ENCODE measurements at regions of chr11 and their contacts with region 1.

Region 1: DNA sequence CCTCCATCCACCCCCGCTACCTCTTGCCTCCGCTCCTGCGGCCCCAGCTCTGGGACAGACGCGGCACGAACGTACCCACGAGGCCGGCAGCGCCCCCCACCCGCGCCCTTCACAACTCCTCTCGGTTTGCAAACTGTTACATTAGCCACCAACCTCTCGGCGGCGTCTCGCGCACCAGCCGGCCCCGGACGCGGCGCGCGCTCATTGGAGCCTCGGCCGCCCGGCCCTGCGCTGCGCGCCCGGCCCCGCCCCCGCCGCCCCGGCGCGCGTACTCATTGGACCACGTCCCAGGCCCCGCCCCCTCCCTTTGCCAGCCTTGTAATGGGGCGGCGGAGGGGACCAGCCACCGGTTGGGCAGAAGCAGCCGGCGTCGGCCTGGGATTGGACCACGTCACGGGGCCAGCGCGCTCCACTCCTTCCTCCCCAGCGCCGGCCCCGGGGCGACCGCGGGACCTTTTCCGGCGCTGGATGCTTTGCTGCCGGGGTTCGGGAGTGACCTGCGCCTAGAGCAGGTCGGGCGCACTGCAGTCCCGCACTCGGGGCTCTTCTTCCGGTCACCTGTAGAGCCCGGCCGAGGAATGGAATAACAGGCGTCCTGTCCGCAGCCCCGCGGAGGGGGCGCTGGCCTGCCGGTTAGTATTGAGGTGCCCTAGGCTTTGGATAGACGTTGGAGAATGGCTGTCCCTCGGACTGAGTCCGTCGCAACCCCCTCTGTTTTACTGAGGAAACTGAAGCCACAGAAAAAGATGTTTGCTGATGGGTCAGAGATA is at the start of gene HYOU1:
- DNase-seq: peak; percentile 99
- H3K4me3 Mint-ChIP-seq: peak within 1 kb of the TSS; percentile 95
- H3K27ac Mint-ChIP-seq: peak within 1 kb of the TSS; percentile 91
- H3K4me1 Mint-ChIP-seq: peaks cover 52% of the 10 kb centered on the region
- H3K27me3 Mint-ChIP-seq: no peaks in the 10 kb centered on the region
- total RNA-seq, gene HYOU1: 123 to 125 TPM

Region 2: DNA sequence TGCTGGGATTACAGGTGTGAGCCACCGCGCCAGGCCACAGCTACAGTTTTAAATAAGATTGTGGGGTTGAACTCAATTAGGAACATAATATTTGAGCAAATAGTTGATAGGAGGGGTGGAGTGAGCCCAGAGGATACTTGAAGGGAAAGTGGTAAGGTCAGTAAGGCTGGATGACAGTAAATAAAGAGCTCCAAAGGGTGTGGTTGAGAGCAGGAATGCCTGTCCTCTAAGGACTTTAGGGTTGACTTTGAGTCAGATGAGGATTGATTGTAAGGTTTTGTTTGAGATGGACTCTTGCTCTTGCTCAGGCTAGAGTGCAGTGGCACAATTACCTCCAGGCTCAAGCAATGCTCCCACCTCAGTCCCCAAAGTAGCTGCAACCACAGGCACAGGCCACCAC is 83.2 kb before region 1 on chr11:
- CTCF ChIA-PET with region 1: no interaction called
- POLR2A ChIA-PET with region 1: no interaction called
- DNase-seq: no peak
- H3K4me3 Mint-ChIP-seq: no peak overlapping the region
- H3K27ac Mint-ChIP-seq: no peak overlapping the region
- H3K4me1 Mint-ChIP-seq: no peaks in the 10 kb centered on the region
- H3K27me3 Mint-ChIP-seq: peaks cover 16% of the 10 kb centered on the region

Region 3: DNA sequence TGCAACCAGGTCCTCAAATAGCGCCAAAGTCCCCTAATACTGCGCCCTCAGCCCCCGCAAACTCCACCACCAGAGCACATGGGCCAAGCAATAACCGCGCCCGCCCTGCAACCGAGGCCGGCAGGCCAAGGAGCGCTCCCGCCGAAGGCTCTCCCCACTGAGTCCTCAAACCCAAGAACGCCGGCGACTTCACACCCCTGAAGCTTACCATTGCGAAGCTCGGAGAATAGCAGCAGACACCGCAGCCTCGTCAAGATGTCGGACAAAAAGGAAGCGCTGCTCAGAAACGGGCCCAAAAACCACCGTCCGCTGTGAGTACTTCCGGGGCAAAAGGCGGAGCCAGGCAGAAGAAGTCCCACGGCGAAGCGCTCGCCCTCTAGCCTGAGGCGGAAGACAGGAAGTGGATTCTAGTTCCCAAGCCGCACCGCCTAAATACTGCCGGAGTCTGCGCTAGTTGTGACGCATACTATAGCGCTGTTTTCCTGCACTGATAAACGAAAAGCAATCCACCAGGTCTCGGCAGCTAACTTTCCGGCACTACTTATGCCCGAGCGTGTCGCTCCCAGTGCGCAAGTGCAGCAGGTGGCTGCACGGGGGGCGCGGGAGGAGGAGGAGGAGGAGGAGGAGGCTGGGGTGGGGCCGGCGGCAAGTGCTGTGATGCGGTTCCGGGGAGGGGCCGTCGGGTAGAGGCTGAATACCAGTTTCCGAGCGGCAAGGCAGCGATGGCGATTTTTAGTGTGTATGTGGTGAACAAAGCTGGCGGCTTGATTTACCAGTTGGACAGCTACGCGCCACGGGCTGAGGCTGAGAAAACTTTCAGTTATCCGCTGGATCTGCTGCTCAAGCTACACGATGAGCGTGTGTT is 38.9 kb before region 1 on chr11 and contains the starts of genes RPS25 and TRAPPC4:
- CTCF ChIA-PET with region 1: interaction called, 21 read pairs
- POLR2A ChIA-PET with region 1: interaction called, 32 read pairs
- DNase-seq: peak; percentile 96
- H3K4me3 Mint-ChIP-seq: peak within 1 kb of the TSS; percentile 90
- H3K27ac Mint-ChIP-seq: peak within 1 kb of the TSS; percentile 100
- H3K4me1 Mint-ChIP-seq: peaks cover 56% of the 10 kb centered on the region
- H3K27me3 Mint-ChIP-seq: no peaks in the 10 kb centered on the region
- total RNA-seq, gene RPS25: 1,257 to 1,287 TPM
- total RNA-seq, gene TRAPPC4: 67.0 to 71.1 TPM

Region 4: DNA sequence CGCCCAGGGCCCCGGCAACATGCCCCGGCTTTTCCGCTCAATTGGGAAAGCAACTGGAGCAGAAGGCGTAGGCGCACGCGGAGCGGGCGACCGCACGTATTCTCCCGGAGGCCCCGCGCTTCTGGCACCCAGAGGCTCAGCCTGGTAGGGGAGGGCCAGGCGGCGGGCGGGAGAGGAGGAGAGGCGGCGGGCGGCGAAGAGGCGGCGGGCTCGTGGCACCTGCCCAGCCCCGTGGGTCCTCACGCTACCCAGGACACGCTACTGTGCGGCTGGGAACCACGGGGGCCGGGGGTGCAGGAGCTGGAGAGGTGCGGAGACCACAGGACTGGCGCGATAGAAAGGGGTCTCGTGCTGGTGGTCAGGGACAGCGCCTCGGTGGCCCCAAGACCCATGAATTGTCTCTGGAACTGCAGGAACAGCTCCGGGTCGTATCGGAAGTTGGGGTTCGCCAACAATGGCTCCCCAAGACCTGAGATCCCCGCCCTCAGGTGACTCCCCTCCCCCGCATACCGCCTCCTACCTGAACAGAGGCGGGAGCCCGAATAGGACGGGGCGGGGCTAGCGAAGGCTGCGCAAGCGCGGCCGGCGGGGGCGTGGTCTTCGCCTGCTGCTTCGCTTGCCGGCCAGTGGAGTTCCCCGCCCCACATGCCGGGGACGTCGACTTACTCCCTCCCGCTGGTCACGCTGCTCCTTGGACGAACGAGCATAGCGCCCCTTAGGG is 26.7 kb before region 1 on chr11 and contains the start of gene SLC37A4:
- CTCF ChIA-PET with region 1: interaction called, 9 read pairs
- POLR2A ChIA-PET with region 1: interaction called, 24 read pairs
- DNase-seq: peak; percentile 98
- H3K4me3 Mint-ChIP-seq: peak within 1 kb of the TSS; percentile 77
- H3K27ac Mint-ChIP-seq: peak within 1 kb of the TSS; percentile 78
- H3K4me1 Mint-ChIP-seq: peaks cover 29% of the 10 kb centered on the region
- H3K27me3 Mint-ChIP-seq: no peaks in the 10 kb centered on the region
- total RNA-seq, gene SLC37A4: 31.6 to 33.9 TPM

Region 5: DNA sequence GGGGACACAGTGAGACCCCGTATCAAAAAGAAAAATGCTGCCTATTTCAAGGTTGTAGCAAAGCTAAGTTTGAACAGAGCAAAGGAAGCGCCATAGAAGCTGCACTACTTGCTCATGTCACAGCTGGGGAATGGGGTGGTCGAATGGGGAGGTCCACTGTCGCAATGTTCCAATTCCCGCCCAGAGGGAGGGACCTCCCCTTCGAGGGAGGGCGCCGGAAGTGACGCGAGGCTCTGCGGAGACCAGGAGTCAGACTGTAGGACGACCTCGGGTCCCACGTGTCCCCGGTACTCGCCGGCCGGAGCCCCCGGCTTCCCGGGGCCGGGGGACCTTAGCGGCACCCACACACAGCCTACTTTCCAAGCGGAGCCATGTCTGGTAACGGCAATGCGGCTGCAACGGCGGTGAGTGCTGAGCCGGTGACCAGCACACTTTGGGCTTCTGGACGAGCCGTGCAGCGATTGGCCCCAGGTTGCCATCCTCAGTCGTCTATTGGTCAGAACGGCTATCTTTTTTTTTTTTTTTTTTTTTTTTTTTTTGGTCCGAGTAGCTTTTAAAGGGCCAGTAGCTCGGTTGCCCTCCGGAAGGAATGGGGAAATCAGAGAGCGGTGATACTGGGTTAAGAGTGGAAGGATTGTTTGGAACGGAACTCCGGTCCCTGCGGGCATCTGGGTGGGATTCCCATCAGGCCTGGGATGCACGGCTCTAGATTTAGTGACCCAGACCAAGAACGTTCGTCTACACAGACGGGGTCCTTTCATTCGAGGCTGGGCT is 27.7 kb after region 1 on chr11 and contains the start of gene HMBS:
- CTCF ChIA-PET with region 1: interaction called, 9 read pairs
- POLR2A ChIA-PET with region 1: interaction called, 11 read pairs
- DNase-seq: peak; percentile 89
- H3K4me3 Mint-ChIP-seq: peak within 1 kb of the TSS; percentile 98
- H3K27ac Mint-ChIP-seq: peak within 1 kb of the TSS; percentile 91
- H3K4me1 Mint-ChIP-seq: peaks cover 47% of the 10 kb centered on the region
- H3K27me3 Mint-ChIP-seq: no peaks in the 10 kb centered on the region
- total RNA-seq, gene HMBS: 17.3 to 18.8 TPM

Region 6: DNA sequence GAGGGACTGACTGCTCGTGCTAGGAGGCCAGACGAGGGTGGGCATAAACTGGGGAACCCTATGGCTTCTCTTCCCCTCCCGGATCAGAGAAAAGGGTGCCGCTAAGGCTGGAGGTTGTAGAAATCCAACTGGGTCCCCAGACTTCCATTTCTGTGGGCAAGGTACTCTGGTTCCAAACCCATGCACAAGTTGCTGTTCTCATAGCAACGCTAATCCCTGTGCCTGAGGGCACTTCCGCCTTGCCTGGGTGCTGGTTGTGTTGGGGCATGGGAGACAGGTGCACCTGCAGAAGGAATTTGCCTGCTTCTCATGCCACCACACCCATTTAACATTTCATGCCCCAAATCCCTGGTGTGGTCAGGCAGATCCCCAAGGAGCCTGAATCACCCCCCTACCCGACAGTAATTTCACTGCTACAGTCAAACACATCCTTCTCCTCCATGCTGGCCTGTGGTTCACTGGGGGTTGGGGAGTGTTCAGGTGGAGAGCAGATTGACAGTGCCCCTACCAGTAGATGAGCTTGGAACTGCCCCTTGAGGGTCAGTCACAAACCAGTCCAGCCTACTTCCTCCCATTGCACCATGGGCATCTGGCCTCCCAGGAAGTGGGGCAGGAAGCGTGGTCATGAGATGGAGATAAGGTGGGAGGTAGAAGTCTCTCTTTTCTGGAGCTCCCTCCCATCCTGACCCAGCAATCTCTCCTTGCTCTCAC is 51.1 kb after region 1 on chr11:
- CTCF ChIA-PET with region 1: interaction called, 4 read pairs
- POLR2A ChIA-PET with region 1: interaction called, 10 read pairs
- DNase-seq: peak; percentile 55
- H3K4me3 Mint-ChIP-seq: peak overlapping the region; percentile 88
- H3K27ac Mint-ChIP-seq: peak overlapping the region; percentile 77
- H3K4me1 Mint-ChIP-seq: peaks cover 49% of the 10 kb centered on the region
- H3K27me3 Mint-ChIP-seq: no peaks in the 10 kb centered on the region

Measured in activated CD4-positive, alpha-beta memory T cell treated with anti-CD3 and anti-CD28 coated beads, Interleukin-2, amount 10 ng/mL, durations not matched to agents 7 days and 5 days (primary cell).